Activated T-helper 2 cell treated with anti-CD3 and anti-CD28 coated beads, Interferon-gamma antibody, Interleukin-2, Interleukin-4, amounts not matched to agents 10 μg/mL and 5 μg/mL and 100 μg/mL, durations not matched to agents 14 hours and 24 hours and 36 hours (primary cell): ENCODE measurements at regions of chr5 and their contacts with region 1.

Region 1: GRCh38 chr5:53481887-53482716 is 1.7 kb downstream of the FST start:
- DNase-seq: peak; percentile 64
- H3K4me3 Mint-ChIP-seq: peak overlapping the region; percentile 86
- H3K27ac Mint-ChIP-seq: peak overlapping the region; percentile 71
- H3K4me1 Mint-ChIP-seq: peaks cover 29% of the 10 kb centered on the region
- H3K27me3 Mint-ChIP-seq: peaks cover 62% of the 10 kb centered on the region

Region 2: DNA sequence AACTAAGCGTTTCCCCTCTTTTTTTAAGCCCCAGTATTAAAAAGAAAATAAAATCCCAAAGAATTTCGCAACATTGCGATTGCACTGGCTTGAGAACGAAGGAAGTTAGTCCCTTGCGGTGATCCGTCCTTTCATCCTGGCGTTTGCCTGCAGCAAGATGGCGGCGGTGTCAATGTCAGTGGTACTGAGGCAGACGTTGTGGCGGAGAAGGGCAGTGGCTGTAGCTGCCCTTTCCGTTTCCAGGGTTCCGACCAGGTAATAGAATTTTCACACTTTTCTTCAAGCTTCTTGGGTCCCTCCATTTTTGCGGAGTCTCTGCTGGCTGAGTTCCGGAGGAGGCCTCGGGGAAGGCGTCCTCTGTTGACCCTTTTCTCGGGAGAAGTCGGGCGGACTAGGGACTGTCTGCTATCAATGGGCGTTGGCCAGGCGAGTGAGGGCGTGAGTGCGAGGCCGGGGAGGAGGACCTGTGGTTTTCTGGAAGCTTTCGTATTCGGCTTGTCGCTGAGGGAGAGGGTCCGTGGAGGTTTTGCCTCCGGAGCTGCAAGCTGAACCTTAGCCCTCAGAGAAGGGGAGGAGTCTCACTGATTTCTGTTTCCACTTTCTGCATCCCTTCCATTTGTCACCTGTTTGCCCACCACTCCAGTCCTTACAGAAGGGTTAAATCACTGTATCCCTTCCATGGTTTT is 78.5 kb after region 1 on chr5 and contains the start of gene NDUFS4:
- intact Hi-C with region 1: loop called (anchors 2 kb)
- DNase-seq: peak; percentile 70
- H3K4me3 Mint-ChIP-seq: peak within 1 kb of the TSS; percentile 93
- H3K27ac Mint-ChIP-seq: peak within 1 kb of the TSS; percentile 80
- H3K4me1 Mint-ChIP-seq: peaks cover 12% of the 10 kb centered on the region
- H3K27me3 Mint-ChIP-seq: peaks cover 15% of the 10 kb centered on the region
- total RNA-seq, gene NDUFS4: 53.7 and 54.1 TPM in 2 replicates

Region 3: GRCh38 chr5:53779541-53779981 is 297.5 kb after region 1 on chr5:
- intact Hi-C with region 1: loop called (anchors 10 kb)
- DNase-seq: no peak
- H3K4me3 Mint-ChIP-seq: no peak overlapping the region
- H3K27ac Mint-ChIP-seq: peak overlapping the region; percentile 19
- H3K4me1 Mint-ChIP-seq: peaks cover 24% of the 10 kb centered on the region
- H3K27me3 Mint-ChIP-seq: no peaks in the 10 kb centered on the region

Region 4: DNA sequence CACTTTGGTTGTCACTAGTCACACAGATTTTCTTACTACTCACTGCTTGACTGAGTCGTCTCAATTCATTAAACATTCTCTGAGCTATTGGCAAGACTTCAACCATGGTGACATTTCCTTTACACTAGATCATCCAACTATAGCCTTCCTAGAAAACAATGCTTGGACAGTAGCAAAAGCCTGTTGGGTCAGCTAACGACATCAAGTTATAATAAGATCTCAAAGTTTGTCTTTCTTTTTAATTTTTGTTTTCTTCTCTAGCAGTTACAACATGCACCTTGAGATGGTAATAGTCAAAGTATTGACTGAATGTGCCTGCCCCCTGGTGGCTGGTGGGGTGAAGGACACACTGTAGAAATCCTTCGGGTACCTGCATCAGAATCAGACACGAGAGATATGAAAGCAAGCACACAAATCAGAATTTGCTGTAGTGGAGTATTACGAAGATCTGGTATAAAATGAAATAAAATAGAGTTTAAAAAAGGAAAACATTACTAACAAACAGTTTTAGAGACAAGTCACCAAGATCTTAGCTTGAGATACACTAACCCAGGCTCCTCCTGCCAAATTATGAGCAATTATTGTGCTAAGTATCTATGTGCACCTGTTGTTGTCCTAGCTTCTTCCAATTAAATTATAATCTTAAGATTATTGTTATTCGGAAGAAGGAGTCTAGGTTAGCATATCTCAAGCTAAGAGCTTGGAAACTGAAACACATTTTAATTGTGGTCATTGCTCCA is 747.1 kb after region 1 on chr5:
- intact Hi-C with region 1: loop called (anchors 2 kb)
- DNase-seq: peak; percentile 46
- H3K4me3 Mint-ChIP-seq: no peak overlapping the region
- H3K27ac Mint-ChIP-seq: no peak overlapping the region
- H3K4me1 Mint-ChIP-seq: no peaks in the 10 kb centered on the region
- H3K27me3 Mint-ChIP-seq: peaks cover 11% of the 10 kb centered on the region